ENCODE measurements at regions of chr6 and their contacts with region 1.

Region 1: GRCh38 chr6:73461537-73462350 is at the start of gene MTO1:
- DNase-seq: peak; percentile 66
- ATAC-seq: peak; percentile 93
- H3K4me3 Mint-ChIP-seq: peak within 1 kb of the TSS; percentile 98
- H3K27ac Mint-ChIP-seq: peak within 1 kb of the TSS; percentile 97
- H3K4me1 Mint-ChIP-seq: peaks cover 7% of the 10 kb centered on the region; the same call in 1 of the 2 replicates
- H3K27me3 Mint-ChIP-seq: no peaks in the 10 kb centered on the region
- CTCF ChIP-seq: no peak
- total RNA-seq, gene MTO1: 24.1 to 32.4 TPM (median 28.2 TPM) in 3 replicates

Region 2: GRCh38 chr6:73285674-73286283 is 176.0 kb before region 1 on chr6:
- CTCF ChIA-PET with region 1: interaction called, 12 read pairs
- POLR2A ChIA-PET with region 1: no interaction called
- DNase-seq: no peak
- ATAC-seq: peak; percentile 84
- H3K4me3 Mint-ChIP-seq: no peak overlapping the region
- H3K27ac Mint-ChIP-seq: no peak overlapping the region
- H3K4me1 Mint-ChIP-seq: peaks cover 9% of the 10 kb centered on the region; the same call in 1 of the 2 replicates
- H3K27me3 Mint-ChIP-seq: no peaks in the 10 kb centered on the region
- CTCF ChIP-seq: no peak

Region 3: GRCh38 chr6:73451223-73452107 is 10.3 kb before region 1 on chr6:
- CTCF ChIA-PET with region 1: interaction called, 14 read pairs
- POLR2A ChIA-PET with region 1: interaction called, 15 read pairs
- DNase-seq: peak; percentile 59
- ATAC-seq: peak; percentile 65
- H3K4me3 Mint-ChIP-seq: peak overlapping the region; percentile 67
- H3K27ac Mint-ChIP-seq: no peak overlapping the region
- H3K4me1 Mint-ChIP-seq: peaks cover 6% of the 10 kb centered on the region
- H3K27me3 Mint-ChIP-seq: peaks cover 35% of the 10 kb centered on the region
- CTCF ChIP-seq: no peak

Region 4: GRCh38 chr6:73491377-73491776 is 29.6 kb after region 1 on chr6:
- CTCF ChIA-PET with region 1: no interaction called
- POLR2A ChIA-PET with region 1: no interaction called
- DNase-seq: no peak
- ATAC-seq: no peak
- H3K4me3 Mint-ChIP-seq: no peak overlapping the region
- H3K27ac Mint-ChIP-seq: no peak overlapping the region
- H3K4me1 Mint-ChIP-seq: no peaks in the 10 kb centered on the region
- H3K27me3 Mint-ChIP-seq: no peaks in the 10 kb centered on the region
- CTCF ChIP-seq: no peak

Region 5: DNA sequence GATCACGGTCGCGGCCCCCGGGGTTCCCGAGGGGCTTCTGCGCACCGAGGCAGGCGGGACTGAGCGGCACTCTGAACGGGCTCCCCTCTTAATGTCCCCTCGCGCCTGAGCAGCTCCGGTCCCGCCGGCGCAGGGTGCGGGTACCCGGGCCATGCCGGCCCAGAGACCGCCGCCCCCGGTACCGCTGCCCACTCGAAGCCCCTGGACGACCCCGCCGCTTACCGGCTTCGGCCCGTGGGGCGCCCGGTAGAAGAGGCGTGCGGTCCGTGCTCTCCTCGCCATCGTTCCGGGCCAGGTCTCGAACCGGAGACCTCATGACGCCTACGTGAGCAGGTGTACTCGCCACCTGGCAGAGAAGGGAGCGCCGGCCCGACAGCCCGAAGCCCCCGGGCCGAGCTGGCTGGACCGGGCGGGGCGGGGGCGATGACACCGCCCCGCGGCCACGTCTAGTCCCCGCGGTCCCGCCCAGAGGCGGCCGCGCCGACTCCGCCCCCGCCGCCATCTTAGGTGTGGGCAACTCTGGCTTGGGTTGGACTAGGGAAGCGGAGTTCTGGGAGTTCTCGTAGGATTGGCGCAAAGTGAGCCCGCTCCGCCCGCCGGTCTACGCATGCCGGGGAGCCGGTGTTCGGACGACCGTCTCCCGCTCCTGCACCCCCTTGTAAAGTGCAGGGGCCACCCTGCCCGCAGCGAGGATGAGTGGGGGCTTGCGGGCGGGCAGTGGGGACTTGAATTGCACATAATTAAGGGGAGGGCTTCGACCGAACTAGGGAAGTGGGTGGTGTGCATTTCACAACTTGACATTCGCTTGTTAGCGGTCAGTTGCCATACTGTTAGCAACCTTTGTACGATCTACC is 192.1 kb after region 1 on chr6 and contains the start of gene SLC17A5:
- CTCF ChIA-PET with region 1: interaction called, 14 read pairs
- POLR2A ChIA-PET with region 1: interaction called, 5 read pairs
- DNase-seq: peak; percentile 95
- ATAC-seq: peak; percentile 94
- H3K4me3 Mint-ChIP-seq: peak within 1 kb of the TSS; percentile 95
- H3K27ac Mint-ChIP-seq: peak within 1 kb of the TSS; percentile 95
- H3K4me1 Mint-ChIP-seq: peaks cover 16% of the 10 kb centered on the region
- H3K27me3 Mint-ChIP-seq: no peaks in the 10 kb centered on the region
- CTCF ChIP-seq: no peak
- total RNA-seq, gene SLC17A5: 8.6 to 9.3 TPM (median 8.9 TPM) in 3 replicates

Measured in WTC11 (cell line).